ENCODE measurements at regions of chr12 and their contacts with region 1.

Region 1: GRCh38 chr12:1795785-1796514 is 24.4 kb upstream of the LRTM2 start:
- DNase-seq: peak; percentile 90 to 97 (median 94)
- ATAC-seq: peak; percentile 93
- H3K4me3 ChIP-seq: peak overlapping the region; percentile 80 to 82
- H3K4me3 Mint-ChIP-seq: peak overlapping the region; percentile 90
- H3K27ac ChIP-seq: peak overlapping the region; percentile 54 to 80
- H3K27ac Mint-ChIP-seq: peak overlapping the region; percentile 91
- H3K4me1 ChIP-seq: peaks cover 22% of the 10 kb centered on the region
- H3K4me1 Mint-ChIP-seq: peaks cover 20% of the 10 kb centered on the region
- H3K27me3 ChIP-seq: no peaks in the 10 kb centered on the region
- H3K27me3 Mint-ChIP-seq: no peaks in the 10 kb centered on the region
- CTCF ChIP-seq: peak; percentile 92

Region 2: DNA sequence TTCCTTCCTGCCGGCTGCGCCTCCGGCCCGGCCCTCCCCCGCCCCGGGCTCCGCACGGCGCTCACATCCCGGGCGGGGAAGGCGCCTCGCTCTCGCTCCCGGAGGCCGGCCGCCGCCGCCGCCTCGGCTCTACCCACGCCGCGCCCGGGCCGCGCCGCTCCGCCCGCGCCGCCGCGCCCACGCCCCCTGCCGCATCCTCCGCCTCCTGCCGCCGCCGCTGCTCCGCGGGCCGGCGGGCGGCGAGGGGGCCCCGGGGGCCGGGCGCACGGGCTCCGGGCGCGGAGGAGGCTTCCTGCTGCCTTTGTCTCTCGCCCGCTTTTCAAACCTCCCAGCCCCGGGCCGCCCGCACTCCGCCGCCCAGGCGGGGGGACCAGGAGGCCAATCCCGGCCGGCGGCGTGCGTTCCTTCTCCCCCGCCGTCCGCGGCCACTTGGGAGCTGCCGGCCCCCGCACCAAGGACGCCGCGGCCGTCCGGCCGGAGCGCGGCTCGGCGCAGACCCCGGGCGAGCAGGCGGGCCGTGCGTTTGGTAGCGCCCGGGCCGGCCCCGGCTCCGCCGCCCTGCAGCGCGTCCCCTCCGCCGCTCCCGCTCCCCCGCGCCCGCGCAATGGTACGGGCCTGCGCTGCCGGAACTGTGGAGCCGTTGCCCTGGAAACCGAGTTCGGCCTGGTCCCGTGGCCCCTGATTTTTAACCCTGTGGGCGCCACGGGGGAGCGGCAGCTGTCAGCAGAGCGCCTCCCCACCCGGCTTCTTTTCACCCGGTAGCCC is 201.5 kb before region 1 on chr12 and contains the start of gene FBXL14:
- CTCF ChIA-PET with region 1: interaction called, 5 read pairs
- POLR2A ChIA-PET with region 1: no interaction called
- intact Hi-C with region 1: loop called in 1 of 2 experiments (anchors 2 kb)
- DNase-seq: peak; percentile 84 to 96 (median 92)
- ATAC-seq: peak; percentile 59
- H3K4me3 ChIP-seq: peak within 1 kb of the TSS; percentile 68 to 83
- H3K4me3 Mint-ChIP-seq: peak within 1 kb of the TSS; percentile 92
- H3K27ac ChIP-seq: peak within 1 kb of the TSS; percentile 81 to 86
- H3K27ac Mint-ChIP-seq: peak within 1 kb of the TSS; percentile 92
- H3K4me1 ChIP-seq: peaks cover 37% of the 10 kb centered on the region
- H3K4me1 Mint-ChIP-seq: peaks cover 53% of the 10 kb centered on the region
- H3K27me3 ChIP-seq: no peaks in the 10 kb centered on the region
- H3K27me3 Mint-ChIP-seq: no peaks in the 10 kb centered on the region
- CTCF ChIP-seq: no peak
- total RNA-seq, gene FBXL14: 28.1 to 30.5 TPM

Region 3: GRCh38 chr12:1650260-1650977 is 145.5 kb before region 1 on chr12:
- CTCF ChIA-PET with region 1: interaction called, 454 read pairs
- POLR2A ChIA-PET with region 1: interaction called, 16 read pairs
- intact Hi-C with region 1: loop called (anchors 1 kb)
- DNase-seq: peak in 1 of 9 experiments; percentile 0
- ATAC-seq: no peak
- H3K4me3 ChIP-seq: no peak overlapping the region
- H3K4me3 Mint-ChIP-seq: no peak overlapping the region
- H3K27ac ChIP-seq: no peak overlapping the region
- H3K27ac Mint-ChIP-seq: no peak overlapping the region
- H3K4me1 ChIP-seq: no peaks in the 10 kb centered on the region
- H3K4me1 Mint-ChIP-seq: peaks cover 3% of the 10 kb centered on the region
- H3K27me3 ChIP-seq: no peaks in the 10 kb centered on the region
- H3K27me3 Mint-ChIP-seq: peaks cover 13% of the 10 kb centered on the region
- CTCF ChIP-seq: no peak

Region 4: DNA sequence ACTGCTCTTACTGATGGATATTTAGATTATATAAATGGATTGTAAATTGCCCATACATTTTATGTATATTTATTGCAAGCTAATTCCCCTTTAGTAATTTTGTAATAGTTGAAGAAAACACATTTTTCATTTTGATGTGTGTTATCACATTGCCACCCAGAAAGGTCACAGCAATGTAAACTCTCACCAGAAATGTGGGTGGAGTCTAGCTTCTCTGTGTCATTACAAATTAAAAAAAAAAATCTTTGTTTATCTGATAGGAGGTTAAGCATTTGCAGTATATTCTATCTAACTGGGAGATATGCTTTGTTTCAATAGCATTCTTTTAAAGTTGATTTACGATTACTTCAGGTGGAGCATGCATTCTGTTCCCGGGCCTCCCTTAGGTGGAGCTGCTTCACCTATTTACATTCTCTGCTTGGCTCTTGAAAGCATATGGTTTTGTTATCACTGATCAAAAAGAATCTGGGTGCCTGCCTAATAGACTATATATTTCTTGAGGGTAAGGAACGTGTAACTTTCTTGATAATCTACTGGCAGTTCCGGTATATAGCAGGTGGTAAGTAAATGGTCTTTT is 97.2 kb before region 1 on chr12:
- CTCF ChIA-PET with region 1: interaction called, 12 read pairs
- POLR2A ChIA-PET with region 1: interaction called, 4 read pairs
- intact Hi-C with region 1: loop called in 1 of 2 experiments (anchors 2 kb)
- DNase-seq: no peak
- ATAC-seq: no peak
- H3K4me3 ChIP-seq: no peak overlapping the region
- H3K4me3 Mint-ChIP-seq: no peak overlapping the region
- H3K27ac ChIP-seq: no peak overlapping the region
- H3K27ac Mint-ChIP-seq: no peak overlapping the region
- H3K4me1 ChIP-seq: peaks cover 16% of the 10 kb centered on the region
- H3K4me1 Mint-ChIP-seq: peaks cover 68% of the 10 kb centered on the region
- H3K27me3 ChIP-seq: no peaks in the 10 kb centered on the region
- H3K27me3 Mint-ChIP-seq: no peaks in the 10 kb centered on the region
- CTCF ChIP-seq: no peak

Region 5: DNA sequence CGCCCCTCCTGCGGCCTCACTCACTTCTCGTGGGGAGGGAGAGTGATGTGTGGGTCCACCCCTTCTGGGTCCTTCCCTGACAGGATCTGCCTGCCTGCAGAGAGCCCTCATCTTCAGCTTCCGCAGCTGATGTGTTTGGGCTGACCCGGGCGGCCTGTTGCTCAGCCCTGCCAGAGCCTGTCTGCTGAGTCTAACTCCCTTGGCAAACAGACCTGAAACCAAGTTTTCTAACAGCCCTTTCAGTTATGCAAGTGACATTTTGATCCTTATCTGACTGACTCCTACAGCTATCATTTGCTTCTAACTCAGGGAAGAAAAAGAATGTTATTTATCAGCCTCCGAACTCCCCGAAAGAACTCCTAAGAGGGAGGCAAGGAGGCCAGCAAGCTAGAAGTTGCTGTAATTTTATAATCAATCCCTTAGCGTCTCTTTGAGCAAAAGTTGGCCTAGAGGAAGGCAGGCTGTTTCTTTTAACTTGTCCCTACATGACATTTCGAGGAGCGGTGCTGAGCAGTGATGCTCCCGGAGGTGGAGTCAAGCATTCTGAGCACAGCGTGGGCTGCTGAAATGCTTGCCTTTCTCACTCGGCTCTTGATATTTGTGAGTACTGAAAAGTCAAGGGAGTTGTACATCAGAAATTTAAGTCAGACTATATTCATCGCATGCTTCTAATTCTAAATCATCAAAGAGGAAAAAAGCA is 154.0 kb after region 1 on chr12:
- CTCF ChIA-PET with region 1: interaction called, 212 read pairs
- POLR2A ChIA-PET with region 1: no interaction called
- intact Hi-C with region 1: no loop called
- DNase-seq: no peak
- ATAC-seq: no peak
- H3K4me3 ChIP-seq: no peak overlapping the region
- H3K4me3 Mint-ChIP-seq: no peak overlapping the region
- H3K27ac ChIP-seq: no peak overlapping the region
- H3K27ac Mint-ChIP-seq: no peak overlapping the region
- H3K4me1 ChIP-seq: no peaks in the 10 kb centered on the region
- H3K4me1 Mint-ChIP-seq: no peaks in the 10 kb centered on the region
- H3K27me3 ChIP-seq: no peaks in the 10 kb centered on the region
- H3K27me3 Mint-ChIP-seq: no peaks in the 10 kb centered on the region
- CTCF ChIP-seq: no peak

Region 6: DNA sequence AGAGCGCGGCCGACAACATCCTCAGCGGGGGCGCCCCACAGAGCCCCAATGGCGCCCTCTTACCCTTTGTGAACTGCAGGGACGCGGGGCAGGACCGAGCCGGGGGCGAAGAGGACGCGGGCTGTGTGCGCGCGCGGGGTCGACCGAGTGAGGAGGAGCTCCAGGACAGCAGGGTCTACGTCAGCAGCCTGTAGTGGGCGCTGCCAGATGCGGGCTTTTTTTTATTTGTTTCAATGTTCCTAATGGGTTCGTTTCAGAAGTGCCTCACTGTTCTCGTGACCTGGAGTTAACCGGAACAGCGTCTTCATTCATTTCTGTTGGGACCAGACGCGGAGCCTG is 895.0 kb after region 1 on chr12:
- CTCF ChIA-PET with region 1: no interaction called
- POLR2A ChIA-PET with region 1: no interaction called
- intact Hi-C with region 1: loop called in 1 of 2 experiments (anchors 2 kb)
- DNase-seq: peak in 8 of 9 experiments; percentile 35 to 86 (median 66)
- ATAC-seq: peak; percentile 75
- H3K4me3 ChIP-seq: peak overlapping the region; percentile 50 to 80
- H3K4me3 Mint-ChIP-seq: peak overlapping the region; percentile 92
- H3K27ac ChIP-seq: peak overlapping the region; percentile 75 to 87
- H3K27ac Mint-ChIP-seq: peak overlapping the region; percentile 90
- H3K4me1 ChIP-seq: peaks cover 30% of the 10 kb centered on the region
- H3K4me1 Mint-ChIP-seq: peaks cover 48% of the 10 kb centered on the region
- H3K27me3 ChIP-seq: no peaks in the 10 kb centered on the region
- H3K27me3 Mint-ChIP-seq: no peaks in the 10 kb centered on the region
- CTCF ChIP-seq: no peak